Aorta (tissue), 5 donors: ENCODE measurements at regions of chr4 and their contacts with region 1.

Region 1: DNA sequence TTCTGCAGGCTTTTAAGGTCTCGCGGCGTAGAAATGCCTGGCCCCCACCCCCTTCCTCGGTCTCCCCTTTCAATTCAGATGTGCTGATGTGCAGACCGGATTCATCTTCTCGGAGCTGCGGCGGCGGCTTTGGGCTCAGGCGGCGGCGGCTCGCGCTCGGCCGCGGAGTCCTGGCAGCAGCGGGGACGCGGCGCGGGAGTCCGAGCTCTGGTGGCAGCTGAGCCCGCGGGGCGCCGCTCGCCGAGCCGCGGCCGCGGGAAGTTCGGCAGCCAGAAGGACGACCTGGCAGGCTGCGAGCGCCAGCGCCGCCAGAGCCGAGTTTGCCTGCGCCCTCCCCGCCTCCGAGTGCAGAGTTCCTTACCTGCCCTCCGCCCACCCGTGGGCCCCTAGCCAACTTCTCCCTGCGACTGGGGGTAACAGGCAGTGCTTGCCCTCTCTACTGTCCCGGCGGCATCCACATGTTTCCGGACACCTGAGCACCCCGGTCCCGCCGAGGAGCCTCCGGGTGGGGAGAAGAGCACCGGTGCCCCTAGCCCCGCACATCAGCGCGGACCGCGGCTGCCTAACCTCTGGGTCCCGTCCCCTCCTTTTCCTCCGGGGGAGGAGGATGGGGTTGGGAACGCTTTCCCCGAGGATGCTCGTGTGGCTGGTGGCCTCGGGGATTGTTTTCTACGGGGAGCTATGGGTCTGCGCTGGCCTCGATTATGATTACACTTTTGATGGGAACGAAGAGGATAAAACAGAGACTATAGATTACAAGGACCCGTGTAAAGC is 448 bp downstream of the TLL1 start:
- DNase-seq: peak; percentile 44 to 80
- ATAC-seq: peak; percentile 56
- H3K4me3 ChIP-seq: peak overlapping the region; percentile 33 to 38
- H3K27ac ChIP-seq: no peak overlapping the region
- H3K4me1 ChIP-seq: no peaks in the 10 kb centered on the region
- H3K27me3 ChIP-seq: no peaks in the 10 kb centered on the region

Region 2: DNA sequence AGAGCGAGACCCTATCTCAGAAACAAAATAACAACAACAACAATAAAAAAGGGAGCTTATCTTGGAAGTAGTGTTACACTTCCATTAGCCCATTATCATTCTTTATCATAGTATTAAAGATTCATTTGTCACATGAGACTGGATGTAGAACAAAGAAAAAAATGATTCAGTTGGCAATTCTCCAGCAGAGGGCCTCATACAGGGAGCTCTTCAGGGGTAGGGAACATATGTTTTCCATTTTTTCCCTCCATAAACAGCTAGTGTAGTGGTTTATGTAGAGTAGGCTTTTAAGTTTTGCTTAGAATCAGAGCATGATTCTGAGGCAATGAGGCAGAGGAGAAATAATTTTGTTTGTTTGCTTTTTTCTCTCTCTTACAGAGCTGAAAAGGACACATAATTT is 488.9 kb before region 1 on chr4:
- intact Hi-C with region 1: no loop called
- DNase-seq: no peak
- ATAC-seq: no peak
- H3K4me3 ChIP-seq: no peak overlapping the region
- H3K27ac ChIP-seq: peak overlapping the region in 1 of 2 donors; percentile 79
- H3K4me1 ChIP-seq: peaks cover 2 to 7% of the 10 kb centered on the region in 2 donors
- H3K27me3 ChIP-seq: no peaks in the 10 kb centered on the region

Region 3: GRCh38 chr4:165678236-165678935 is 195.1 kb before region 1 on chr4:
- intact Hi-C with region 1: loop called in 1 of 2 experiments (anchors 10 kb)
- DNase-seq: no peak
- ATAC-seq: no peak
- H3K4me3 ChIP-seq: no peak overlapping the region
- H3K27ac ChIP-seq: no peak overlapping the region
- H3K4me1 ChIP-seq: no peaks in the 10 kb centered on the region
- H3K27me3 ChIP-seq: no peaks in the 10 kb centered on the region